Activated T-helper 1 cell treated with anti-CD3 and anti-CD28 coated beads, Interleukin-12 subunit alpha, Interleukin-12 subunit beta, Interleukin-2, Interleukin-4 antibody, amounts not matched to agents 30 ng/mL and 10 ng/mL and 1 ng/mL, durations not matched to agents 14 hours and 24 hours and 36 hours (primary cell): ENCODE measurements at regions of chr5 and their contacts with region 1.

Region 1: GRCh38 chr5:73591102-73591695 is 25.7 kb downstream of the UTP15 start:
- DNase-seq: peak; percentile 38
- H3K4me3 Mint-ChIP-seq: no peak overlapping the region
- H3K27ac Mint-ChIP-seq: no peak overlapping the region
- H3K4me1 Mint-ChIP-seq: no peaks in the 10 kb centered on the region
- H3K27me3 Mint-ChIP-seq: peaks cover 9% of the 10 kb centered on the region

Region 2: DNA sequence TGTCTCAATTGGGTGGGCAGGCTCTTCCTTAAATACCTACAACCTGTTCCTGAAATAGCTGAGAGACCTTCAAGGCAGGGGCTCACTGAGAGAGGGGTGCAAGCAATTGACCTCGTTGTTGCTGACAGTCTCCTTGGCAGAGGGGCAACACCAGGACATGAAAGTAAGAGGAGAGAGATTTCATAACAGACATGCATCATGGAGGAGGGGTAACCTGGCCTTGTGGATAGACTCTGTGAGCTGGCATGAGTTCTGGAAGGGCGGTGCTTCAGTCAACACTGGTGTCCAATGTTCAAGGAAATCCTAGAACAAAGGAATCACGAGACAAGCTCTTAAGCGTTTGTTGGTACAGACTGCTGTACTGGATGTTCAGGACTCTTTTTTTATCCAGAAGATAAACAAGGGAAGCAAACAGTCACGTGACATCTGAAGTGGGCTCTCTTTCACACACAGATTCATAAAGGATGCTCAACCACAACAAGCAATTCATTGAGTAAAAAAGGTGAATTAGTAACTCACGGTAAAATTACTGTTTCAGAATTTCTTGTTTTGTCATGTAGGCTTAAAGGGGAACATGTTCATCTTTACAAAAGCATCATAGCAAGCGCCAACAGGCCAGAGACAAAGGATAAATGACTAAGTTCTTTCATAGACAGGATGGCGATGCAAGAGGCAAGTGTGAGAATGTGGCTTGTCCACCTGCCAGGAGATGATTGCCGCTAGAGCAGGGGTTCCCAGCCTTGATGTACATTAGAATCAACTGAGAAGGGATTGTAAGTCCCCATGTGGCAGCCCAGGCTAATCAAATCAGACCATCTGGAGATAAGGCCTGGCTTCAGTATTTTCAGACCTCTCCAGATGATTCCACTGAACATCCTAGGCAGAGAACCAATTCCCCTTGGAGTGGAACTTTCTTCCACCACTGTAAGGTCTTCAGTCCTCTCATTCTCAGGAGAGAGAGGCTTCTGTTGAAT is 46.5 kb before region 1 on chr5:
- intact Hi-C with region 1: no loop called
- DNase-seq: no peak
- H3K4me3 Mint-ChIP-seq: no peak overlapping the region
- H3K27ac Mint-ChIP-seq: no peak overlapping the region
- H3K4me1 Mint-ChIP-seq: peaks cover 20% of the 10 kb centered on the region
- H3K27me3 Mint-ChIP-seq: peaks cover 6% of the 10 kb centered on the region

Region 3: GRCh38 chr5:73693481-73694061 is 102.4 kb after region 1 on chr5:
- intact Hi-C with region 1: loop called (anchors 5 kb)
- DNase-seq: no peak
- H3K4me3 Mint-ChIP-seq: no peak overlapping the region
- H3K27ac Mint-ChIP-seq: no peak overlapping the region
- H3K4me1 Mint-ChIP-seq: peaks cover 18% of the 10 kb centered on the region
- H3K27me3 Mint-ChIP-seq: peaks cover 9% of the 10 kb centered on the region

Region 4: DNA sequence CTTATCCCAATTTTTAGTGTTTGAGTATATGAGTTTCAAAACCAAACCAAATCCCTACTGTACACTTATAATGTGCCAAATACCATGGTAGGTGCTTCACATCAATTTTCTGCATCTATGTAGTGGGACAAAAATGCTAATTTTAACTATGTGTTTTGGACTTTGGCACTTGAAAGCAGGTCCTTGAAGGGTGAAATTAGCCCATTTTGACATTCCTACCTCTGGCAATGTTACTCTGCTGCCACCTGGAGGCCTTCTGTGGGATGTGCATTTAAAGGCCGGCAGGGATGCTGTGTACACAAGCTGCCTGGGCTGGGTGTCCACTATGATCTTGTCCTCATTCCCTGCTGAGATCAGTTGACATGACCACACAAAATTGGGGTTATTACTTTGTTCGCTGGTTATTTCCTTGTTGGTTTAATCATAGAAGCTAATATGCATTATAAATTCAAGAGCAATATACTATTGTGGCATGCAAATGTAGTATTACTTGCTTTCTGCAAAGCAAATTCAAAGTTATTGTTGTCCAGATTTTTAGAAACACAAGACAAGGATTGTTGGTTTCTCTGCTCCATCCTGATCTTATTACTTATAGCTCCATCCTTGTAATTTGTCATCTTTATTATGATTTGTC is 201.6 kb after region 1 on chr5:
- intact Hi-C with region 1: loop called (anchors 1 kb)
- DNase-seq: peak; percentile 43
- H3K4me3 Mint-ChIP-seq: no peak overlapping the region
- H3K27ac Mint-ChIP-seq: no peak overlapping the region
- H3K4me1 Mint-ChIP-seq: peaks cover 11% of the 10 kb centered on the region
- H3K27me3 Mint-ChIP-seq: peaks cover 4% of the 10 kb centered on the region

Region 5: DNA sequence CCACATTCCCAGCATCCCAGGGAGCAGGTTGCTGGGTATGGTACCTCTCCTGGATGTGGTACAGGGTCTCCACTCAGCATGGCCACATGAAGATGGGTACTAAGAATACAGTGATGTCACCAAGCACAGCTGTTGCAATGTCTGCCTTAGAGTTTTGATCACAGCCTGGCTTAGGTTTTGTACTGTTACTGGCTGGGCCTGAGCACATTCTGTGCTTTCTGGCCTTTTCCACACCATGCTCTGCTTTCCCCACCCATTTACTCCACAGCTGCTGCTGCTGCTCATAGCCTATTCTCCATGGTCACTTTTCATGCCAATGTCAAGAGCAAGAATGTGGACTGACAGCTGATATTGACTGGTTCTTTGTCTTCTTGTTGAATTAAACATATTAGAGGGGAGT is 516.7 kb after region 1 on chr5:
- intact Hi-C with region 1: no loop called
- DNase-seq: no peak
- H3K4me3 Mint-ChIP-seq: no peak overlapping the region
- H3K27ac Mint-ChIP-seq: no peak overlapping the region
- H3K4me1 Mint-ChIP-seq: no peaks in the 10 kb centered on the region
- H3K27me3 Mint-ChIP-seq: peaks cover 5% of the 10 kb centered on the region